Left colon (tissue), 2 donors: ENCODE measurements at regions of chr12 and their contacts with region 1.

Region 1: DNA sequence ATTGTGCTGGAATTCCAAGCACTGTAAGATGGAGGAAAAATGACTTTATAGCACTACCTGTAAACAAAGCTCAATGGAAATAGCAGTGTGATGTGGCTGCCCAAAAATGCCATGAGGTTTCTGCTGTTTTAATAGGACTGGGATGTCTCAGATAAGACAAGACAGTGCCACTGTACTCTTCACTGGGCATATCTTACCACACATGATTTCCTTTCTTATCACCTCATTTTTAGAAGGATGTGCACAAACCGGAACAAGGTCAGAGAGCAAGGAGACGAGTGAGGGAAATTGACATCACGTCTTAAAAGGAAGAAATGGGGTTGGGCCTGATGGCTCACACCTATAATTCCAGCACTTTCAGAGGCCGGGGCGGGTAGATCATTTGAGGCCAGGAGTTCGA is 38.4 kb upstream of the FGD4 start:
- DNase-seq: no peak
- ATAC-seq: no peak

Region 2: DNA sequence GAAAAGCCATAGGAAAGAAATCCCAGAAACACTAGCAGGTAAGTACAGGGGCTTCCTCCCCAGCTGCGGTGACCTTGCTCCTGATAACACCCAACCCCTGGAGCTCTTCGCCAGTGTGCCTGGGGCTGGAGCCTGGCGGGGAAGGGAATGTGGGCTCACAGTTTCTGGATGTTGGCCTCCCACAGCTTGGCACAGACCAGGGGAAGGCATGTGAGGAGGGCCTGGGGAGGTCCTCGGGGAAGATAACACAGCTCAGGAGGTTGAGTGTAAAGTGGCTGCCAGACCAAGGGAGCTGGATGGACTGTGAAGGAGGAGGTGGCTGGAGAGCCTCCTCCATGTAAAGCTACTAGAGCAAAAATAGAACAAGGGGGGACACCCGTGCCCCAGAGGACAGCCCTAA is 134.2 kb before region 1 on chr12:
- intact Hi-C with region 1: no loop called
- DNase-seq: no peak
- ATAC-seq: no peak

Region 3: GRCh38 chr12:32516230-32516629 is 155.3 kb after region 1 on chr12:
- intact Hi-C with region 1: no loop called
- DNase-seq: no peak
- ATAC-seq: no peak

Region 4: GRCh38 chr12:32671930-32672780 is 311.2 kb after region 1 on chr12:
- intact Hi-C with region 1: loop called in 1 of 2 experiments (anchors 5 kb)
- DNase-seq: peak in 1 of 2 donors; percentile 31
- ATAC-seq: peak; percentile 89